SK-N-SH (cell line): ENCODE measurements at regions of chr11 and their contacts with region 1.

Region 1: DNA sequence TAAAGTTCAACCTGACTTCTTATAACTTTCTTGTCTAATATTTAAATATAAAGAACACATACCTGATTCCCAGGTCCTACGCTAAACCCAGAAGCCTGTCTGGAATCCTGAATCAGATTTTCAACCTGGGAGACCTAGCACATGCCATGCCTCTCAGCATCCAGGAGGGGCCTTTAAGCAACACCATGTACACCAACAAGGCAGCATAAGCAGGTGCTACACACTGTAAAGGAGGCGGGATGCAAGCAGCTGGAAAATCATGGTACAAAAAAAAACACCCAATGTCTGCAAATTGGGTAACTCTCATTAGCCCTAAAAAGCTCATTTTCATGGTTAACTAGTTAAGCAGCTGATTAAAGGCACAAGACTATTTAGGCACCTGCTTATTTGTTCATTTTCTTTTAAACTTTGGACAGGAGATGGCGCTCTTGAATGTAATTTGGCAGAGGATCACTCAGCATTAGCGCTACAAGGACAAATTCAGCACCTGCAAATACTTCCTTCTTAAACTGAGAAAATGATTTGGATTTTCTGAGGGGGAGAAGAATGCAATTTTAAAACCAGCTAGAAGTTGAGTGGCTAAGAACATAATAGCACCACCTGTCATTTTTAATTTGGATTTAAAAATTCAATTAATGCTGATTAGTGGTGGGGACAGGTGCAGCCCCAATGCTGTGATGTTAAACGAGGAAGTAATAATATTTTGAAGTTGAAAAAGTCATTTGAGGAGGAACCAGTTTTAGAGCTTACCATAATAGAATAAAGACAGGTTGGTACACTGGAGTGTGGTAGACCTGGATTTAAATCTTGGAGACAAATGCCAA is 104.0 kb downstream of the FAR1 start:
- DNase-seq: peak; percentile 39
- H3K4me3 ChIP-seq: no peak overlapping the region
- H3K27ac ChIP-seq: no peak overlapping the region
- H3K4me1 ChIP-seq: no peaks in the 10 kb centered on the region
- H3K27me3 ChIP-seq: 0 out of 2 replicates have a peak, but pooled peaks cover 5% of the 10 kb centered on the region
- CTCF ChIP-seq: peak; percentile 60
- EP300 ChIP-seq: no peak
- RAD21 ChIP-seq: peak; percentile 84

Region 2: GRCh38 chr11:13550761-13551160 is 221.7 kb before region 1 on chr11:
- CTCF ChIA-PET with region 1: no interaction called
- POLR2A ChIA-PET with region 1: no interaction called
- DNase-seq: no peak
- H3K4me3 ChIP-seq: no peak overlapping the region
- H3K27ac ChIP-seq: no peak overlapping the region
- H3K4me1 ChIP-seq: no peaks in the 10 kb centered on the region; a peak in 1 of 4 replicates
- H3K27me3 ChIP-seq: no peaks in the 10 kb centered on the region
- CTCF ChIP-seq: no peak
- EP300 ChIP-seq: no peak
- RAD21 ChIP-seq: no peak

Region 3: GRCh38 chr11:13629779-13630178 is 142.7 kb before region 1 on chr11:
- CTCF ChIA-PET with region 1: no interaction called
- POLR2A ChIA-PET with region 1: no interaction called
- DNase-seq: no peak
- H3K4me3 ChIP-seq: no peak overlapping the region
- H3K27ac ChIP-seq: no peak overlapping the region
- H3K4me1 ChIP-seq: no peaks in the 10 kb centered on the region
- H3K27me3 ChIP-seq: no peaks in the 10 kb centered on the region
- CTCF ChIP-seq: no peak
- EP300 ChIP-seq: no peak
- RAD21 ChIP-seq: no peak

Region 4: DNA sequence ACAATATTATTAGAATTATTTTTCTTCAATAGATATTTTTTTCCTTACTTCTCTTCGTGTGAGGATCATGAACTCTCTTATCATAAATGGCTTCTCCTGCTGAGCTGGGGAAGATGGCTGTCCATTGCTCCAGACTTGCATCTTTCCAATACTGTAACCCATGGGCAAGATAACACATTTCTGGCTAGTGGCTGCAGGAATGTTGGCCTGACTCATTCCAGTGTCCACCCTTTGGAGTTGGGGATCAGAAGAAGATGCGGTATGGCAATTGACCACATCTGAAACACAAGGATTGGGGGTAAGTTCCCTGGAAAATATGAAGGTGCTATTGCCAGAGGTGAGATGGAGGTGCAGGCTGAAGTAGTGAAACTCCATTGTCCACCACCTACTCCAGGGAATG is 11.2 kb before region 1 on chr11:
- CTCF ChIA-PET with region 1: interaction called, 26 read pairs
- POLR2A ChIA-PET with region 1: no interaction called
- DNase-seq: no peak
- H3K4me3 ChIP-seq: no peak overlapping the region
- H3K27ac ChIP-seq: no peak overlapping the region
- H3K4me1 ChIP-seq: no peaks in the 10 kb centered on the region
- H3K27me3 ChIP-seq: no peaks in the 10 kb centered on the region
- CTCF ChIP-seq: no peak
- EP300 ChIP-seq: no peak
- RAD21 ChIP-seq: no peak

Region 5: GRCh38 chr11:13944911-13945425 is 172.5 kb after region 1 on chr11:
- CTCF ChIA-PET with region 1: interaction called, 25 read pairs
- POLR2A ChIA-PET with region 1: no interaction called
- DNase-seq: no peak
- H3K4me3 ChIP-seq: no peak overlapping the region
- H3K27ac ChIP-seq: no peak overlapping the region
- H3K4me1 ChIP-seq: no peaks in the 10 kb centered on the region; a peak in 1 of 4 replicates
- H3K27me3 ChIP-seq: no peaks in the 10 kb centered on the region
- CTCF ChIP-seq: no peak
- EP300 ChIP-seq: no peak
- RAD21 ChIP-seq: no peak

Region 6: GRCh38 chr11:13970986-13971385 is 198.6 kb after region 1 on chr11:
- CTCF ChIA-PET with region 1: interaction called, 34 read pairs
- POLR2A ChIA-PET with region 1: no interaction called
- DNase-seq: peak; percentile 64
- H3K4me3 ChIP-seq: no peak overlapping the region
- H3K27ac ChIP-seq: no peak overlapping the region
- H3K4me1 ChIP-seq: peaks cover 0 to 3% of the 10 kb centered on the region in 2 experiments; a peak in 1 of 4 replicates
- H3K27me3 ChIP-seq: peaks cover 7% of the 10 kb centered on the region; the same call in 1 of the 2 replicates
- CTCF ChIP-seq: no peak; the same call in 1 of the 2 replicates
- EP300 ChIP-seq: no peak
- RAD21 ChIP-seq: peak; percentile 69

Region 7: DNA sequence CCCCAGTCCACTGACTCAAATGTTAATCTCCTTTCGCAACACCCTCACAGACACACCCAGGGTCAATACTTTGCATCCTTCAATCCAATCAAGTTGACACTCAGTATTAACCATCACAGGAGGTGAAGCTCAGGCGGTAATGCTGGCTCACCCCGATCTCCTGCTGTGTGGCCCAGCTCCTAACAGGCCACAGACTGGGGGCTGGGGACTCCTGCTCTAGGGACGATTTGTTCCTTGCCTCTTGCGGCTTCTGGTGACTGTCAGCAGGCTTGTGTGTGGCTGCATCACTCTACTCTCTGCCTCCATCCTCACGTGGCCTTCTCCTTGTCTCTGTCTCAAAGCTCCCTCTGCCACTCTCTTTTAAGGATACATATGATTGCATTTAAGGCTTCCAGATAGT is 235.1 kb after region 1 on chr11:
- CTCF ChIA-PET with region 1: no interaction called
- POLR2A ChIA-PET with region 1: no interaction called
- DNase-seq: no peak
- H3K4me3 ChIP-seq: no peak overlapping the region
- H3K27ac ChIP-seq: no peak overlapping the region
- H3K4me1 ChIP-seq: no peaks in the 10 kb centered on the region
- H3K27me3 ChIP-seq: no peaks in the 10 kb centered on the region
- CTCF ChIP-seq: no peak
- EP300 ChIP-seq: no peak
- RAD21 ChIP-seq: no peak

Region 8: GRCh38 chr11:14249121-14249963 is 476.9 kb after region 1 on chr11:
- CTCF ChIA-PET with region 1: interaction called, 50 read pairs
- POLR2A ChIA-PET with region 1: no interaction called
- DNase-seq: peak; percentile 66
- H3K4me3 ChIP-seq: no peak overlapping the region
- H3K27ac ChIP-seq: no peak overlapping the region
- H3K4me1 ChIP-seq: peaks cover 0 to 17% of the 10 kb centered on the region in 2 experiments; a peak in 1 of 4 replicates
- H3K27me3 ChIP-seq: peaks cover 20% of the 10 kb centered on the region; the same call in 1 of the 2 replicates
- CTCF ChIP-seq: peak; percentile 93
- EP300 ChIP-seq: no peak
- RAD21 ChIP-seq: peak; percentile 97